Sciatic nerve (tissue), 2 donors: ENCODE measurements at regions of chr13 and their contacts with region 1.

Region 1: DNA sequence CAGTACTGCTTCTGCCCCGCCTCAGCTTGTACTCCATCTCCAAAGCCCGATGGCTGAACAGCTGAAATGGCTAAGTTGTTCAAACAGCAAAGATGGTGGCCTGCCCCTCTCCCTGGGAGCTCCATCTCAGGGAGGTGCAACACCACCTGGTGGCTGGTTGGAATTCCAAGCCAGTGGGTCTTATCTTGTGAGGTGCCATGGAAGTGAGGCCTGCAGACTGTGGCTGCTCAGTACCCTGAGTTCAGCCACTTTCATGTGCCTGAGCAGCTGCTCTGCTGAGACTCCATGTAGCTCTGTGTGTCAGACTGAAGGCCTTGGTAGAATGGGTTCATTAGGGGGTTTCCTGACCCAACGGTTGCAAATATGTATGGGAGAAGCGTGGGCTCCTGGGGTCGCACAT is 67.3 kb upstream of the SPRY2 start:
- DNase-seq: no peak
- ATAC-seq: no peak

Region 2: DNA sequence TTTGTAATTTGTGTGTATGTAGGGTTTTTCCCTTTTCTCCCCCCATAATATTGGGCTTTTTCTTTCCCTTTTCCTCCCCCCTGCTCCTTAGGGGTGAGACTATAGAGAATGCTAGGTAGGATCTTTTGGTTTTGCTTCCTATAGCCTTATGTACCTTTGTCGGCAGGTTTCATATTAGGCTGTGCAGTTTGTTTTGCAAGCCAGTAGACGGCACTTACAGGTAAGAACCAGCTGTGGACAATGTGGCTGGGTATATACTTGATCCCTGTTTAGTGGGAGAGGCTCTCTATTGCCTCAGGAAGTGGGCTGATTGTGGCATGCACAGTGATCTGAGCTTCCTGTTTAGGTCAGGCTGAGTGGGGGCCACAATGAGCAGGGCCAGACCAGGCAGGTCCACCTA is 1390.1 kb before region 1 on chr13:
- intact Hi-C with region 1: loop called (anchors 5 kb)
- DNase-seq: no peak
- ATAC-seq: no peak